ENCODE measurements at regions of chrX and their contacts with region 1.

Region 1: GRCh38 chrX:25020905-25021449 is 5.2 kb upstream of the ARX start:
- DNase-seq: peak in 4 of 9 donors; percentile 6 to 51 (median 26)
- ATAC-seq: peak; percentile 51
- H3K4me3 ChIP-seq: no peak overlapping the region
- H3K4me3 Mint-ChIP-seq: peak overlapping the region; percentile 8 to 79 (median 59)
- H3K27ac ChIP-seq: no peak overlapping the region
- H3K27ac Mint-ChIP-seq: no peak overlapping the region
- H3K4me1 ChIP-seq: peaks cover 4 to 7% of the 10 kb centered on the region in 2 donors
- H3K4me1 Mint-ChIP-seq: peaks cover 7 to 39% (median 26%) of the 10 kb centered on the region in 7 donors
- H3K27me3 ChIP-seq: peaks cover 3 to 9% of the 10 kb centered on the region in 2 donors
- H3K27me3 Mint-ChIP-seq: peaks cover 42 to 82% (median 60%) of the 10 kb centered on the region in 5 donors

Region 2: GRCh38 chrX:24732766-24733500 is 288.0 kb before region 1 on chrX:
- CTCF ChIA-PET with region 1: no interaction called
- POLR2A ChIA-PET with region 1: no interaction called
- intact Hi-C with region 1: no loop called
- DNase-seq: no peak
- ATAC-seq: peak; percentile 46
- H3K4me3 ChIP-seq: no peak overlapping the region
- H3K4me3 Mint-ChIP-seq: no peak overlapping the region
- H3K27ac ChIP-seq: no peak overlapping the region
- H3K27ac Mint-ChIP-seq: no peak overlapping the region
- H3K4me1 ChIP-seq: no peaks in the 10 kb centered on the region
- H3K4me1 Mint-ChIP-seq: no peaks in the 10 kb centered on the region
- H3K27me3 ChIP-seq: no peaks in the 10 kb centered on the region
- H3K27me3 Mint-ChIP-seq: no peaks in the 10 kb centered on the region

Region 3: DNA sequence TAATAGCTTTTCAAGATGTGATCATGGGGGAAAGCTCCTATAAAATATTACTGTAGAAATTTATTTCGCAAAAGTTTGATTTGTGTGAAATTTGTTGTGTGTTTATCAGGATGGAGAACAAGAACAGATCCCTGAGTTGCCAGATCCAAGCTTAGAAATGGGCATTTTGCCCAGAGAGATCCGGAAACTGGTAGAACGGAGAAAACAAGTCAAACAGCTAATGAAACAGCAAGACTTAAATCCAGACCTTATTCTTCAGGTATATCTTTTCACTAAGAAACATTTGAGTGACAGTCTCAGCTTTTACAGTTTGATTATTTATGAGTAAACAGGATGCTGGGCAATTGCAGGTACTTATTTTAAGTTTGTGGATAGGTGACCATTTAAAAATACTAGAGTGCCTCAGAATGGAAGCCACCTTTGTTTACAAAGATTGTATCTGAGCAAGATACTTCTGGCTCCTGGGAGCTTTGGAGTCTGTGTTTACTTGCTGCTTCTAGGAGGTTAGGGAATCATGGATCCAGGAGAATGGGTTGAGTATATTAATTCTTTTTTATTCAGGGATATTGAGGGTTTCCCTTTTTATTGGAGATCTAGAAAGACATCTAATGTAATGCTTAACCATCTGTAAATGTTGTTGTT is 272.7 kb before region 1 on chrX:
- CTCF ChIA-PET with region 1: no interaction called
- POLR2A ChIA-PET with region 1: no interaction called
- intact Hi-C with region 1: loop called in 1 of 2 experiments (anchors 1 kb)
- DNase-seq: no peak
- ATAC-seq: no peak
- H3K4me3 ChIP-seq: no peak overlapping the region
- H3K4me3 Mint-ChIP-seq: no peak overlapping the region
- H3K27ac ChIP-seq: no peak overlapping the region
- H3K27ac Mint-ChIP-seq: no peak overlapping the region
- H3K4me1 ChIP-seq: no peaks in the 10 kb centered on the region
- H3K4me1 Mint-ChIP-seq: no peaks in the 10 kb centered on the region
- H3K27me3 ChIP-seq: no peaks in the 10 kb centered on the region
- H3K27me3 Mint-ChIP-seq: no peaks in the 10 kb centered on the region

Region 4: DNA sequence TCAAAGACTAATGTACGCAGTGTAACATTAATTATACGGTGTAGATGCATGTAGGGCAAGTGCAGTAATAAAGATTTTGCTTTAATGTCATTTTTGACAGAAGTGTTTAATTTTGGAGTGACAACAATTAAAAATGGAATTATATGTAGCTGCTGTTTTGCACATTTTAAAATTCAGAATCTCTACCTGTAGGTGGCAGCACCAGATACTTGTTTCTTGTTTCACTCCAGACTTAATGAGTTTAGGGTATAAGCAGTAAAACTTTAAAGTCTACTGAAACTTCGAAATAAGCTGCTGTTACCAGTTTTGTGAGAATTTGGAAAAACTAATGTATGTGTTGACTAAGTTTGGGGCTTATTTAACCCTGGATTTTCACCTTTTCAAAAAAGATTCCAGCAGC is 182.3 kb before region 1 on chrX:
- CTCF ChIA-PET with region 1: no interaction called
- POLR2A ChIA-PET with region 1: no interaction called
- intact Hi-C with region 1: loop called (anchors 5 kb)
- DNase-seq: peak in 4 of 9 donors; percentile 4 to 27 (median 18)
- ATAC-seq: no peak
- H3K4me3 ChIP-seq: no peak overlapping the region
- H3K4me3 Mint-ChIP-seq: no peak overlapping the region
- H3K27ac ChIP-seq: no peak overlapping the region
- H3K27ac Mint-ChIP-seq: no peak overlapping the region
- H3K4me1 ChIP-seq: no peaks in the 10 kb centered on the region
- H3K4me1 Mint-ChIP-seq: no peaks in the 10 kb centered on the region
- H3K27me3 ChIP-seq: no peaks in the 10 kb centered on the region
- H3K27me3 Mint-ChIP-seq: no peaks in the 10 kb centered on the region

Region 5: GRCh38 chrX:25004485-25005032 is 16.4 kb before region 1 on chrX:
- CTCF ChIA-PET with region 1: no interaction called
- POLR2A ChIA-PET with region 1: no interaction called
- intact Hi-C with region 1: loop called in 1 of 2 experiments (anchors 2 kb)
- DNase-seq: no peak
- ATAC-seq: no peak
- H3K4me3 ChIP-seq: no peak overlapping the region
- H3K4me3 Mint-ChIP-seq: peak overlapping the region in 3 of 10 donors; percentile 23 to 57 (median 35)
- H3K27ac ChIP-seq: no peak overlapping the region
- H3K27ac Mint-ChIP-seq: no peak overlapping the region
- H3K4me1 ChIP-seq: no peaks in the 10 kb centered on the region
- H3K4me1 Mint-ChIP-seq: peaks cover 6 to 19% (median 13%) of the 10 kb centered on the region in 7 donors
- H3K27me3 ChIP-seq: no peaks in the 10 kb centered on the region
- H3K27me3 Mint-ChIP-seq: peaks cover 20 to 56% (median 38%) of the 10 kb centered on the region in 5 donors

Region 6: GRCh38 chrX:25067271-25068172 is 46.5 kb after region 1 on chrX:
- CTCF ChIA-PET with region 1: no interaction called
- POLR2A ChIA-PET with region 1: no interaction called
- intact Hi-C with region 1: loop called in 1 of 2 experiments (anchors 5 kb)
- DNase-seq: no peak
- ATAC-seq: no peak
- H3K4me3 ChIP-seq: peak overlapping the region; percentile 24
- H3K4me3 Mint-ChIP-seq: peak overlapping the region in 7 of 10 donors; percentile 9 to 69 (median 41)
- H3K27ac ChIP-seq: no peak overlapping the region
- H3K27ac Mint-ChIP-seq: peak overlapping the region in 1 of 9 donors; percentile 23
- H3K4me1 ChIP-seq: no peaks in the 10 kb centered on the region
- H3K4me1 Mint-ChIP-seq: peaks cover 0 to 14% (median 10%) of the 10 kb centered on the region in 7 donors
- H3K27me3 ChIP-seq: no peaks in the 10 kb centered on the region
- H3K27me3 Mint-ChIP-seq: peaks cover 0 to 8% (median 0%) of the 10 kb centered on the region in 5 donors

Region 7: DNA sequence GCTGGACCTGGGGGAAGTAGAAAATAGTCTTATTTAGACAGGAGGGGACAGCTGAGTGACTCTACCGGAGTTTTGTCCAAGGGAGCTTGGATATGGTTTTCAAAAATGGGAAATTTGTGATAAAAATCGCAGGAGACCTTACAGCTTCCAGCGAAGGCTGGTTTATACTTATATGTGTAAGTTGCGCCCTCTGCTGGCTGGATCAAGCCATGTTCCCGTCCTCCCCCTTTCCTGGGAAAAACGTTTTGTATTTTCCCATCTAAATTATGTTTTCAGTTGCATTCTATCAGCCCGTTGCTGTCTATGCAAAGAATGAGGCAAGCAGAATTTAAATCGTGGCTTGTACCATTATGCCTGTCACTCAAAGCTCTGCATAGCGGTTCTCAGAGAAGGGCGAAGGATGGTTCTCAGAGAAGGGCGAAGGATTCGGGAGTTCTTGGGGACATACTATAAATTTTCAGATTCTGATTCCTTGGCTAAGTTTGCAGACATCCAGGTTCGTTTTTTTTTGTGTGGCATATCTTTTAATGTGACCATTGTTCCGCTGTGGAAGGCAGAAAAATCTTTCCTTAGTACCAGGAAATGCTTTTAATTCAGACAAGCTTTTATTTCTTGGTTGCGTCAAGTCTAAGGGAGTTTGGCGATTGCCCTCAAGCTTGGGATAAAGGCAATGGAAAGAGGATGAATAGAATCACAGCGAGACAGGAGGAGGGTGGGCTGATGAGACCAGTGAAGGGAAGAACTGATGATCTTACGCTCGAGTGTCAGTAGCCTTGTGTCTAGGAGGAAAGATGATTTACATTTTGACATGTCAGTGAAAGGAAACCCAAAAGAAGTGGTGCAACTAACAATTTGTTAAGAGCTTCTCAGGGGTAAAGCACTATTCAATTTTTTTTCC is 123.3 kb after region 1 on chrX:
- CTCF ChIA-PET with region 1: no interaction called
- POLR2A ChIA-PET with region 1: no interaction called
- intact Hi-C with region 1: loop called in 1 of 2 experiments (anchors 5 kb)
- DNase-seq: peak in 6 of 9 donors; percentile 5 to 23 (median 12)
- ATAC-seq: no peak
- H3K4me3 ChIP-seq: no peak overlapping the region
- H3K4me3 Mint-ChIP-seq: peak overlapping the region in 1 of 10 donors; percentile 14
- H3K27ac ChIP-seq: no peak overlapping the region
- H3K27ac Mint-ChIP-seq: no peak overlapping the region
- H3K4me1 ChIP-seq: no peaks in the 10 kb centered on the region
- H3K4me1 Mint-ChIP-seq: peaks cover 0 to 7% (median 0%) of the 10 kb centered on the region in 7 donors
- H3K27me3 ChIP-seq: no peaks in the 10 kb centered on the region
- H3K27me3 Mint-ChIP-seq: peaks cover under 1 to 15% (median 5%) of the 10 kb centered on the region in 5 donors

Measured in naive thymus-derived CD4-positive, alpha-beta T cell (primary cell).